ENCODE measurements at regions of chr2 and their contacts with region 1.

Region 1: GRCh38 chr2:219278655-219279516 is at the start of gene DNAJB2:
- DNase-seq: peak; percentile 100
- total RNA-seq, gene DNAJB2: 78.0 TPM

Region 2: DNA sequence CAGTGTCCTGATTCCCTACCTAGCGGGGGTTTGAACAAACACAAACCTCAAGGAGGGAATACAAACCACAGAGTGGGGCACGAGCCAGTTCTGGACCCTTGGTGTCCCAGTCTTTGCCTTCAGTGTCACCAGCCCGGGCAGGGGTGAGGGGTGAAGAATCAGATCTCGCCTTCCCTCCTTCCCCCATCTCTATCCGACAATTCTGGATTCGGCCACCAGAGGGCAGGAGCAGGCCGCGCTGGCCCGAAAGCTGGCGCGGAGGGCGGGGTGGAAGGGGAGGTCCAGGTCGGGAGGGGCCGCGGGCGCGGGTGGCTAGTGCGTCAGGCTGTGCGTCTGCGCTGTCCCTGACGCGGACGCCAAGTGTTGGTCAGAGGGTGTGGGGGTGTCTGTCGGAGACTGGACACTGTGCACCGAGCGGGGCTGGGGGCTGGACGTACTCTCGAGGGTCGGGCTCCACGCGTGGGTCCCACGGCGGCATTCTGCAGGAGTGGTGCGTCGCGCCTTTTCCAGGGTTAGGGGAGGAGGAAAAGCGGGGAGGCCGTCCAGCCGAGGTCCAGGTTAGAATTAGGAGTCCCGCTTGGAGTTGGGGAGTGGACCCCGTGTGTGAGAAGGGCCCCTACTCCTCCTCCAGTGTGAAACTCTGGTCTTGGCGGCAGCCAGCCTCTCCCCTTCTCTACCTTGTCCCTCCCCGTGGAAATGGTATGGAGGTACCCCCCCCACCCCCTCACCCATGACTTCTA is 282.7 kb before region 1 on chr2:
- intact Hi-C with region 1: no loop called
- DNase-seq: peak; percentile 89

Region 3: GRCh38 chr2:219253753-219254590 is 24.9 kb before region 1 on chr2 and contains the start of gene TUBA4A:
- intact Hi-C with region 1: loop called (anchors 2 kb)
- DNase-seq: peak; percentile 95
- total RNA-seq, gene TUBA4A: 164 TPM

Region 4: DNA sequence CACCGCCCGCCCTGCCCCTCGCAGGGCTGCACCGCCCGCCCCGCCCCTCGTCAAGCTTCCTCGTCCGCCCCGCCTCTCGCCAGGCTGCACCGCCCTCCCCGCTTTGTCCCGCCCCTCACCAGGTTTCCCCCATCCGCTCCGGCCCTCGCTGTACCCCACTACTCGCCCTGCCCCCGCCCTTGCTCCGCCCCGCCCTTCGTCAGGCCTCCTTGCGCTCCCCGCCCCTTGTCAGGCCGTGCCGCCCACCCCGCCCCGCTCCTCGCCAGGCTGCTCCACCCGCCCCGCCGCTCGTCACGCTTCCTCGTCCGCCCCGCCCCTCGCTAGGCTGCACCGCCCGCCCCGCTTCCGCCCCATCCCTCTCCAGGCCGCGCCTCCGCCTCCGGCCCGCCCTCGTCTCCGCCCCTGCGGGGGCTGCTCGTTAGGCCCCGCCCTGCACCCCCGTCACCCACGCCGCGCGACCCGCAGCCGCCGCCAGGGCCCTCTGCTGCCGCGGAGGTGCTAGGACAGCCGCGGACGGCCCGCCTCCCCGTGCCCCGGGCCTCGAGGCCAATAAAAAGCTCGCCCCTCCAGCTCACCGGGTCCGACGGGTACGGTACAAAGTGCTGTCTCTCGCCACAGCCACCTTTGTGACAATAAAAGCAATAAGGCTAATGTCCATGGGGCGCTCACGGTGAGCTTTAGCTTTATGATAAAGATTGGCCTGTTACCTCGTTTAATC is 109.4 kb after region 1 on chr2:
- intact Hi-C with region 1: loop called (anchors 5 kb)
- DNase-seq: peak; percentile 99

Measured in cardiac septum (tissue), 1 donor.